Right ventricle myocardium inferior (tissue), 1 donor: ENCODE measurements at regions of chr3 and their contacts with region 1.

Region 1: GRCh38 chr3:160038862-160039562 is 50.4 kb downstream of the IL12A start:
- DNase-seq: no peak
- ATAC-seq: no peak

Region 2: DNA sequence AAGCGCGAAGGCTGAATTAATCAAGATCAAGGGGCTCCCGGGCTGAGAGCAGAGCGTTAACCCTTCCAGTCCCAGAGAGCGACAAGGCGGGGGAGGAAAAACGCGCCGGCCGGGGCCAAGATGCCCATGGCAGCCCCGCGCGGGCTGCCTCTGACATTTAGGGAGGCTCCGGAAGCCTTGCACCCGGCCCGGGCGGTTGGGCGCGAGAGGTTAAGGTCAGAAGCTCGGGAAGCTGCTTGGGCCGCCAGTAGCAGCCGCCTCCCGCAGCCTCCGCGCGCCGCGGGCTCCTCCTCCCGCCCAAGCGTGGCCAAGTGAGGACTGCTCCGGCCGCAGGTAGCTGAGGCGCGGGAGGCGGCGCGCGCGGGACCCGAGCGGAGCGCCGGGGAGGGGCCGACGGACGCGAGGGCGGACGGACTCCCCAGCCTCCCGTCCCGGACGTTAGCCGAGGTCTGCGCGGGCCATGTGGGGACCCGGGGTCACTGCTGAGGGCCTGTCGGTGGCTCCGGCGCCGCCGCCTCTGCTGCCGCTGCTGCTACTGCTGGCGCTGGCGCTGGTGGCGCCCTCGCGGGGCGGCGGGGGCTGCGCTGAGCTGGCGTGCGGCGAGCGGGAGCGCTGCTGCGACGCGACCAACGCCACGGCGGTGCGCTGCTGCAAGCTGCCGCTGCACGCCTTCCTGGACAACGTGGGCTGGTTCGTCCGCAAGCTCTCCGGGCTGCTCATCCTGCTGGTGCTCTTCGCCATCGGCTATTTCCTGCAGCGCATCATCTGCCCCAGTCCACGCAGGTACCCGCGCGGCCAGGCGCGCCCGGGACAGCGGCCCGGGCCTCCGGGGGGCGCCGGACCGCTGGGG is 186.4 kb after region 1 on chr3 and contains the start of gene C3orf80:
- intact Hi-C with region 1: loop called (anchors 10 kb)
- DNase-seq: peak; percentile 70
- ATAC-seq: peak; percentile 78
- total RNA-seq, gene C3orf80: 0.22 TPM